ENCODE measurements at regions of chr1 and their contacts with region 1.

Region 1: DNA sequence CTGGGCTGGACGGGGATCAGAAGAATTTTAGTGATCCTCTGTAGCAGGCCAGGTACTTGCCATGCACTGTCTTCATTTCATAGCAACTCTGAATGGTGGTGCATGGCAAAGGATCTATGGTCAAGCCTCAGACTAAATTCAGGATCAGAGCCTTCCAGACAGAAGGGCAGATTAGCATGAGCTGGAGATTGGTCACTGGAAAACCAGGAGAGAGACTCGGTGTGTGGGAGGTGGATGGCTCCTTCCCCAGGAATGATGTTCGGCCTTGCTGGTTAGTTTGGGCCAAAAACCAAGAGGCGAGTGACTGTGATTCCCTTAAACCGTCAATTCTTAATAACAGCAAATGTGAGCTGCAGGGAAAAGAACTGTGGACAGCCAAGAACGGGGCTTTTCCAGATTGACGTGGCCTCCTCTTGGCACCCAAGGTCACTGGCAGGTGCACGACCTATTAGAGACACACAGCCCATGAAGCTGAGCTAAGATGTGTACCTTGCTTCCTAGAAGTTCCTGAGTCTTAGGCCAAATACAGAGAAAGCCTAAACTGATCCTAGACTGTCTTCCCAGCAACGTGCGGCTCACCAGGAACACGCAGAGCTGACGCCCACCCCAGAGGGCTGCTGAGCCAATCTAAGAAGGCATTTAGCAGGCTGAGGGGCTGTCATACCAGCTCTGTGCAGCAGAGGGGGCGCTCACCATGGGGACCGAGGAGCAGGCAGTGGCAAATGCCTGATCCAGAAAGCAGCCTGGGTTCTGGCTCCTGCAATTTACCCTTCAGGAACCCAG is 18.5 kb downstream of the ALDH4A1 start:
- DNase-seq: peak in 1 of 2 donors; percentile 82
- H3K4me3 ChIP-seq: no peak overlapping the region
- H3K27ac ChIP-seq: no peak overlapping the region
- H3K4me1 ChIP-seq: peaks cover 0 to 3% of the 10 kb centered on the region in 2 donors
- H3K27me3 ChIP-seq: no peaks in the 10 kb centered on the region
- CTCF ChIP-seq: peak; percentile 87 to 95 (median 90)

Region 2: GRCh38 chr1:18854331-18855025 is 29.3 kb before region 1 on chr1:
- intact Hi-C with region 1: no loop called
- DNase-seq: no peak
- H3K4me3 ChIP-seq: no peak overlapping the region
- H3K27ac ChIP-seq: no peak overlapping the region
- H3K4me1 ChIP-seq: no peaks in the 10 kb centered on the region
- H3K27me3 ChIP-seq: no peaks in the 10 kb centered on the region
- CTCF ChIP-seq: no peak

Region 3: DNA sequence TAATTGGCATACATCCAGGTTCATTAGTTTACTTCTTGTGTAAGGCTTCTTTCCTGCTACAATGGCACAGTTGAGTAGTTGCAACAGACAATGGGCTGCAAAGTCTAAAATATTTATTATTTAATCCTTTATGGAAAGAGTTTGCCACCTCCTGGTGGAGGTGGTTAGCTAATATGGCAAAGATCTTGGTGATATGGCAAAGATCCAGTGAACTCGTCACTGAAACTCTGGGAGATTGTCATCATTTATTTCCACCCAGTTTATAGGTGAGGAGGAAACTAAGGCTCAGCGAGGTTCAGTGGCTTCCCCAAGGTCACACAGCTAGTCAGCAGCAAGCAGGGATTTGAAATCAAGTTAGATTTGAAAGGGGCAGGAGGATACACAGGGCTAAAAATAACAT is 88.7 kb after region 1 on chr1:
- intact Hi-C with region 1: loop called (anchors 1 kb)
- DNase-seq: peak in 1 of 2 donors; percentile 66
- H3K4me3 ChIP-seq: no peak overlapping the region
- H3K27ac ChIP-seq: no peak overlapping the region
- H3K4me1 ChIP-seq: no peaks in the 10 kb centered on the region
- H3K27me3 ChIP-seq: no peaks in the 10 kb centered on the region
- CTCF ChIP-seq: peak; percentile 29 to 69 (median 61)

Region 4: DNA sequence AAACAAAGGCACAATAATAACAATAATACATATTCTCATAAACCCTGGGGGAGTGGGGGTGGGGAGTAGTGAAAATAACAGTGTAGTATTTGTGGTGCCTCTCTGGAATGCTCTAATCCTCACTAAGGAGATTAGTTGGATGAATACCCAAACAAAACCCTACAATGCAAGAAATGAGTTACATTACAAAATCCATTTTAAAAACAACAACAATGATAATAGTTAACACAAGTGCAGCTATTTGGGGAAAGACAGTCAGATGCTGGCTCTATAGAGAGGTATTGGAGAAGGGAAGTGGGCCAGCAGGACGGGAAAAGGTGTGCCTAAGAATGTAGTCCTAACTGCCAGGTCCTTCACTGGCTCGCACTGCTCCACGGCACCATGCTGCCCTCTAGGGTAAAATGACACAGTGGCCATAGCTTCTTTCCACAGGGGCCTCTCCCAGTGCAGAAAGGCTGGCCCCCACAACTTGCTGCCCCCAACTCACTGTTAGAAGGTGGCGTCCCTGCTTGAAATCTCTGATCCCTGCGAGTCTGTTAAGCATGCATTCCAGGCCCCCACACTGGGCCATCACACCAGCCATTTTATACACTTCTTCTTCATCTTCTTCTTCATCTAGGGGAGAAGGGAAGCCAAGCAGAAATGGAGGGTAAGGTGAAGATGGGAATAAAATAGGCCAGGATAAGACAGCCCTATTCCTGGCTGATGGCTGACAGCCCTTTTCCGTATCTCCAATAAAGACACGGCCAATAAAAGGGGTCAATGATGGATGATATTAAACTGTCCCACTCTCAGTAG is 212.4 kb after region 1 on chr1:
- intact Hi-C with region 1: loop called (anchors 5 kb)
- DNase-seq: no peak
- H3K4me3 ChIP-seq: no peak overlapping the region
- H3K27ac ChIP-seq: no peak overlapping the region
- H3K4me1 ChIP-seq: no peaks in the 10 kb centered on the region
- H3K27me3 ChIP-seq: no peaks in the 10 kb centered on the region
- CTCF ChIP-seq: peak in 2 of 3 experiments; percentile 23 to 47

Measured in ascending aorta (tissue), 2 donors.